Activated CD8-positive, alpha-beta memory T cell treated with anti-CD3 and anti-CD28 coated beads, Interleukin-2, amount 10 ng/mL, durations not matched to agents 7 days and 5 days (primary cell): ENCODE measurements at regions of chr1 and their contacts with region 1.

Region 1: DNA sequence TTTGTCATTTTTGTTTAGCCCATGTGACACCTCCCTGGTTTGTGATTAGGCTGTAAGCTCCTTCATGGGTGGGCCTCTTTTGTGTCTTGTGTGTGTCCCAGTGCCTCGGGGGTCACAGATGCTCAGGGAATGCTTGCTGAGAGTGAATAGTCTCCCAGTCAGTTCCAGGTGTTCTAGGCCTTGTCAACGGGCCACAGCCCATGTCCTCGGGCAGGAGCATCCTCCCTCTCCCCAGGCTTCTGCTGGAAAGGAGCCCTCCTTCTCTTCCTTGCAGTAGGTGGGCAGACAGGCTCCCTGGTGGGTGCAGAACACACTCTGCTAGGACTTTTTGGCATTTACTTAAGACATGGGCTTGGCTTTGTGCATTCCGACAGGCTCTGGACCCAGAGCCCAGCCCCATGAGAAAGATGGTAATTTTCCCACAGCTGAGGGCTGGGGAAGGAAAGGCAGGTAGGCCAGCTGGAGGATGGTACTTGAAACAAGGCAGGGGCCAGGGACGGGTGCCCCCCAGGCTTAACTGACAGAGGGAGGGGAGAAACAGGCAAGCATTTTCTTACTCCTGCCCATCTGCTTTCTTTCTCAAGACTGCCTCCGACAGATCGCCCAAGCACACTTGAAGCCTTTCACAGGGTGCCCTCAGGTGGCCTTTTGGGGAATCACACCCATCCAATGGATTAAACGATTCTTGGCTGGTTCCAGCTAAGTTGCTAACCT is 7.1 kb upstream of the CPLANE2 start:
- DNase-seq: peak; percentile 85
- ATAC-seq: peak; percentile 84
- H3K4me3 Mint-ChIP-seq: no peak overlapping the region
- H3K27ac Mint-ChIP-seq: no peak overlapping the region
- H3K4me1 Mint-ChIP-seq: peaks cover 10% of the 10 kb centered on the region
- H3K27me3 Mint-ChIP-seq: no peaks in the 10 kb centered on the region

Region 2: DNA sequence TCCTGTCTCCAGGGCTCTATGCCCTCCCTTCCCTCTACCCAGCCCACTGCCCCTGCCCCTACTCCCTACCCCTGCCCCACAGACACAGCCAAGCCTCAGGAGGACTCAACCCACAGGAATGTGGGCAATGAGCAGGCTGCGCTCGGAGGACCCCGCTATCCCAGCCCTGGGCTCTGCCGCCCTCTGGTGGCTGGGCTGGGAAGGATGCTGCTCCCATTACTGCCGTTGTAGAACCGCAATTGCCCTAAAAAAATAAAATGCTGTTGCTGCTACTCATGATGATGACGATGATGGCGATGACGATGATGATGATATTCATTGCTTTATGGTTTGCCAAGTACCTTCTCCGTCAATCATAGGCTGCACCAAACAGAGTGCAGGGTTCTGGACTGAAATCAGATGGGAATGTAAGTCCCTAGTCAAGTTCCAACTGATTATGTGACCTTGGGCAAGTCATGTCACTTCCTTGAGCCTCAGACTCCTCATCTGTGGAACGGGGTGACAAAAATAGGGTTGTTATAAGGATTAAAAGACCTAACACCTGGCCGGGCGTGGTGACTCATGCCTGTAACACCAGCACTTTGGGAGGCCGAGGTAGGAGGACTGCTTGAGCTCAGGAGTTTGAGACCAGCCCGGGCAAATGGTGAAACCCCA is 56.2 kb before region 1 on chr1:
- CTCF ChIA-PET with region 1: interaction called, 29 read pairs
- DNase-seq: peak; percentile 78
- ATAC-seq: peak; percentile 84
- H3K4me3 Mint-ChIP-seq: no peak overlapping the region
- H3K27ac Mint-ChIP-seq: no peak overlapping the region
- H3K4me1 Mint-ChIP-seq: peaks cover 2% of the 10 kb centered on the region
- H3K27me3 Mint-ChIP-seq: peaks cover 11% of the 10 kb centered on the region

Region 3: DNA sequence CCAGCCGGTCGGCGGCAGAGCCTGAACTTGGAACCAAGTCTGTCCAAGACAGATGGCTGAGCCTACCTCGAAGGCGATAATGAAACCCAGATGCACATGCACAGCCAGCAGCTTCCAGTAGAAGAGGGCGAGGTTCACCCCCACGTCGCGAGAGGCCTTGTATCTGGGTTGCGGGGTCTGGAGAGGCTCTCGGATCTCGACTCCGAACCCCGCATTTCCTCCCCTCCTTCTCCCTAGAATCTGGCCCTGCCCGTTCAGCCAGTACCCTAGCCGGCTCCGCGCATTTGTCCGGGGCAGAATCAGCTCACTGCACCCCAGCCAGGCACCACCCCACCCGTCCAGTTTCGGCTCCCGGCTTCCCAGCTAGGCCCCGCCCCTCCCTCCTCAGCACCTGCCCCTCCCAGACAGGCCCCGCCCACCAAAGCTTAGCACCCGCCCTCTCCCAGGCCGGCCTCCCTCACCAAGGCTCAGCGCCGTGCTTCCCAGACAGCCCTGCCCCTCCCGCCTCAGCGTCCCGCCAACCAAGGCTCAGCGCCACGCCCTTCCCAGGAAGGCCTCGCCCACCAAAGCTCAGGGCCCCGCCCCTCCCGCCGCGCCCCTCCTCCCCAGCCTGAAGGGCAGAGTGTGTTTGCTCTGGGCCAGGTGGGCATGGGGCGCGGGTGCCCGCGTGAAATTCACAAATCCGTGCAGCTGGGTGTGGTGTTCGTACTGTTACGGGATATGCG is 26.9 kb before region 1 on chr1:
- CTCF ChIA-PET with region 1: interaction called, 13 read pairs
- DNase-seq: peak; percentile 98
- ATAC-seq: peak; percentile 97
- H3K4me3 Mint-ChIP-seq: peak overlapping the region; percentile 85
- H3K27ac Mint-ChIP-seq: peak overlapping the region; percentile 87
- H3K4me1 Mint-ChIP-seq: peaks cover 24% of the 10 kb centered on the region
- H3K27me3 Mint-ChIP-seq: peaks cover 11% of the 10 kb centered on the region

Region 4: DNA sequence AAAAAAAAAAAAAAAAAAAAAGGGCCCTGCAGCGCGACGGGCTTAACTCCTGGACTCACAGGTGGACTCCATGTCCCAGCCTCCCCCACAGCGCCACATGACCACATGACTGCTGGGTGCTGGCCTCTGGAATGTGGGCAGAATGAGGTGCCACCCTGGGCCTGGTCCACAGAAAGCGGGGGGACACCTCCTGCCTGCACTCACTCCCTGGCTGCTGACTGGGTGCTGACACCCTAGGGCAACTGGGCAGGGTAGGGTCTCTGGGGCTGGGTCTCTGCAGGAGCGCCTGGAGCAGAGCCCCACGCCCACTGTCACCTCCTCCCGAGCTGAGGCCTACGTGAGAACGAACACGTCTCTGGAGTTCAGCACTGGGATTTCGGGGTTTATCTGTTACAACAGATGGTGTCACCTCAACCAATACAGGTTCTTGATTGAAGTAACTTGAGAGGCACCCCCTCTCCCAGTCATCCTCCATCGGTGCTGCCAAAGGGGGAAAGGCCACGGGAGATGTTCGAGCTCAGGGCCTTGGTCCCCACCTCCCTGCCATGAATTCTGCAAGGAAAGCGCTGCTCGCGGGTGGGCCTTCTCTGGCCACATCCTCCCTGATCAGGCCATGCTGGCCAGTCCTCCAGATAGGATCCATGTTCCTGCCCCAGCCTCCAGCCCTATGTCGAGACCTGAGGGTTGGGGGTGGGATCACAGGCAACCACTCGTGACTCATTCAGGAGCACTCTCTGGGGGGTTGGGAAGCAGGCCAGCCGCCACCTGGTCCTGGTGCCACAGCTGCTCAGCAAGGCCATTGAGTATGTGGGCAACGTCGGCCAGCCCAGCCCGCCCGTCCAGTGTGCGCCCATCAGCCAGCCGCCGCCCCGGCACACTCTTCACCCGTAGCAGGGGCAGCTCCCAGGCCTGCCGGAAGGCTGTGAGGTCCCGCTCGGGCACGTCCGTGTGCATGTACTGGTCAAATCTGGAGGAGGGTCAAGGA is 12.5 kb before region 1 on chr1:
- CTCF ChIA-PET with region 1: interaction called, 16 read pairs
- DNase-seq: no peak
- ATAC-seq: no peak
- H3K4me3 Mint-ChIP-seq: no peak overlapping the region
- H3K27ac Mint-ChIP-seq: no peak overlapping the region
- H3K4me1 Mint-ChIP-seq: peaks cover 11% of the 10 kb centered on the region
- H3K27me3 Mint-ChIP-seq: peaks cover 24% of the 10 kb centered on the region